Activated T-helper 1 cell treated with anti-CD3 and anti-CD28 coated beads, Interleukin-12 subunit alpha, Interleukin-12 subunit beta, Interleukin-2, Interleukin-4 antibody, amounts not matched to agents 30 ng/mL and 10 ng/mL and 1 ng/mL, durations not matched to agents 14 hours and 24 hours and 36 hours (primary cell): ENCODE measurements at regions of chr9 and their contacts with region 1.

Region 1: DNA sequence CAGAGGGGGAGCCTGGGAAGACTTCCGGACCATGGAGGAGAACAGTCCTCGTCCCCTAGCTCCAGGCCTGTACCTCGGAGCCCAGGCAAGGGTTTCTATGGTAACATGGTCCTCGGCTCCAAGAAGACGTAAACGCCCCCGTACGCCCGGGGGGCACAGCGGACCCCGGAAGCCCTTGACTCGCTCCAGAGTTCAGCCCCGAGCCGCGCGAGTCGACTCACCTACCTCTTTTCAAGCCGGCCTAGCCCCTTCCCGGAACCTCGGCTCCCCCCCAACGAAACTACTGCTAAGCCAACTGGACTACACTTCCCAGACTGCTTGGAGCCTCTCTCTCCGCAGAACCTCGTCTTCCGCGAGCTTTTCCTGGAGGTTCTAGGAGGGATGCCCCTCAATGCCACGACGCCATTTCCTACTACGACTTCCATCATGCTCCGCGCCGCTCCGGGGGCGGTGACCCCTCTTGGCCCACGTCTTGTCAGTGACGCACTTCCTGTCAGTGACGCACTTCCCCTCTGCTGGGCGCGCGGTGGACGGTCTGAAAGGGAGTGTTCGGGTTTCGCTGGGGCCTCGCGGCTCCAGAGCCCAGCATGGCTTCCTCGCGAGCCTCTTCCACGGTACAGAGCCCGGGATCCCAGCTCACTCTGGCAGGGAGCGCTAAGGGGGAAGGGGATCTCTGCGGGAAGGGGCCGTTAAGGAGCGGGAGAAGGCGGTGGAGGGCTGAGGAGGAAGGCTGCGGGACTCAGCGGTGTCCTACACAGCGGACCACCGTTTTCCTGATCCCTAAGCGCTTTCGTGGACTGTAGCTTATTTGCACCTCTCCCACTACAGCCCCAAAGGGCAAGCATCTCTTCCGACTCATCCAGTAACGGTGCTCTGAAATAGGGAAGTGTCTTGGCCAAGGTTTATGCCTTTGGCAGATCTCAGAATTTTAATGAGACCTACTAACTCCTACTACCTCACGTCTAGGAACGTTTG is at the starts of genes CDC26 and PRPF4:
- DNase-seq: peak; percentile 94
- H3K4me3 Mint-ChIP-seq: no peak within 1 kb of the TSS
- H3K27ac Mint-ChIP-seq: no peak within 1 kb of the TSS
- H3K4me1 Mint-ChIP-seq: peaks cover 30% of the 10 kb centered on the region
- H3K27me3 Mint-ChIP-seq: no peaks in the 10 kb centered on the region
- total RNA-seq, gene CDC26: 49.9 and 50.6 TPM in 2 replicates
- total RNA-seq, gene PRPF4: 59.2 and 60.2 TPM in 2 replicates

Region 2: DNA sequence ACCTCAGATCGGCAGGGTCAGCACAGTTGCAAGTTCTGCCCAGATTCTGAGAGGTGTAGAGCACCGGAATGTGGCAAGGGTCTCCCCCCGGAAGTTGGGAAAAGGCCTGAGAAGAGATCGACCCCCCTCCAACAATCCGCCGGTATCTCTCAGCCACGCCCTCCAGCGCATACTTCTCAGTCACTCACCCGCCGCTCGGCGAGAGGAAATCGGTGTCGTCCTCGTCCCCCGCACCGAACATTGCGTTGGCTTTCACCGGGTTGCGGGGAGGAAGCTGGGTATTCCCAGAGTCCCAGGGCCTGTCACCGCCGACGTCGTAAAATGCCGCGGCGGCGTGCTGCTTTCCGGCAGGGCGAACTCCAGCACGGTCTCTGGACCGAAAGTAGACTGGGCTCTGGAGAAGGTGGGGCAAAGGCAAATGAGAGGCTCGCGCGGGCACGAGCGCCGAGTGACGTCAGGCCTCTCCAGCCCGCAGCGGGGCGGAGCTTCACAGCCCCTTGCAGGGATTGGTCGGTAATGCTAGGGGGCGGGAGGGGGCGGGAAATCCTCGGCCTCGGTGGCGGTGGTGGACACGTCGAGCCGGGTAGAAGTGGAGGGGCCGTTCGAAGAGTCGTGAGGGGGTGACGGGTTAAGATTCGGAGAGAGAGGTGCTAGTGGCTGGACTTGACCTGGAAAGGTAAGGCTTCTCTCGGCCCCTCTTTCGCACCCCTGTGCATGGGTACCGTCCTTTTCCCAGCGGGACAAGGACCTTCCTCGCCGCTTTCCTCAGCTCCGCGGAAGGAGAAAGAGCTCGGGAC is 54.2 kb before region 1 on chr9 and contains the starts of genes FKBP15 and SLC31A1:
- intact Hi-C with region 1: loop called (anchors 1 kb)
- DNase-seq: peak; percentile 96
- H3K4me3 Mint-ChIP-seq: peak within 1 kb of the TSS; percentile 98
- H3K27ac Mint-ChIP-seq: peak within 1 kb of the TSS; percentile 97
- H3K4me1 Mint-ChIP-seq: peaks cover 64% of the 10 kb centered on the region
- H3K27me3 Mint-ChIP-seq: no peaks in the 10 kb centered on the region
- total RNA-seq, gene FKBP15: 34.9 and 35.8 TPM in 2 replicates
- total RNA-seq, gene SLC31A1: 16.1 and 17.6 TPM in 2 replicates

Region 3: DNA sequence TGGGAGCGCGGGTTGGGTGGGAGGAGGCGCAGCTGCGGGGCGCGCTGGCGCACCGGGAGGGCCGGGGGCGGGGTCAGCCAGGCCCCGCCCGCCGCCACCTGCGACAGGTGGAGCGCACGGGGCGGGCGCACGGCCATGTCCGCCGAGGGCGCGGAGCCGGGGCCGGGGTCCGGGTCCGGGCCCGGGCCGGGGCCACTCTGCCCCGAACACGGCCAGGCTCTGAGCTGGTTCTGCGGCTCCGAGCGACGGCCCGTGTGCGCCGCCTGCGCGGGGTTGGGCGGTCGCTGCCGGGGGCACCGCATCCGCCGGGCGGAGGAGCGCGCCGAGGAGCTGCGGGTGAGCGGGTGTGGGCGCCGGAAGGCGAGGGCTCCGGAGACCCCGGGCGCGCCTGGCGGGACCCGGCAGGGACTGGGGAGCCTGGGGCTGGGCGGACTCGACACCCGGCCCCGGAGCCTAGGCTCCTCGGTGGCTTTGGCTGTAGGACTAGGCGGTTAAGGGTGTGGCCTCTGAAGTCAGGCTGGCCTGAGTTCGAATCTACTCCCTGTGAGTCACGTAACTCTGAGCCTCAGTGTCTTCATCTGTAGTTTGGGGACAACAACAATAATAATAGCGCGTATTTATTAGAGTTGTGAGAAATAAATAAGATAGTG is 74.1 kb after region 1 on chr9 and contains the start of gene BSPRY:
- intact Hi-C with region 1: loop called (anchors 2 kb)
- DNase-seq: peak; percentile 51
- H3K4me3 Mint-ChIP-seq: peak within 1 kb of the TSS; percentile 93
- H3K27ac Mint-ChIP-seq: peak within 1 kb of the TSS; percentile 92
- H3K4me1 Mint-ChIP-seq: peaks cover 68% of the 10 kb centered on the region
- H3K27me3 Mint-ChIP-seq: no peaks in the 10 kb centered on the region
- total RNA-seq, gene BSPRY: 12.3 and 12.8 TPM in 2 replicates

Region 4: GRCh38 chr9:113401027-113401792 is 125.8 kb after region 1 on chr9 and contains the start of gene ALAD:
- intact Hi-C with region 1: loop called (anchors 1 kb)
- DNase-seq: peak; percentile 99
- H3K4me3 Mint-ChIP-seq: peak within 1 kb of the TSS; percentile 89
- H3K27ac Mint-ChIP-seq: peak within 1 kb of the TSS; percentile 67
- H3K4me1 Mint-ChIP-seq: peaks cover 25% of the 10 kb centered on the region
- H3K27me3 Mint-ChIP-seq: no peaks in the 10 kb centered on the region
- total RNA-seq, gene ALAD: 23.0 and 23.7 TPM in 2 replicates

Region 5: GRCh38 chr9:113578882-113579282 is 303.4 kb after region 1 on chr9:
- intact Hi-C with region 1: loop called (anchors 1 kb)
- DNase-seq: peak; percentile 83
- H3K4me3 Mint-ChIP-seq: peak overlapping the region; percentile 69
- H3K27ac Mint-ChIP-seq: peak overlapping the region; percentile 91
- H3K4me1 Mint-ChIP-seq: peaks cover 68% of the 10 kb centered on the region
- H3K27me3 Mint-ChIP-seq: no peaks in the 10 kb centered on the region